ENCODE measurements at regions of chr5 and their contacts with region 1.

Region 1: DNA sequence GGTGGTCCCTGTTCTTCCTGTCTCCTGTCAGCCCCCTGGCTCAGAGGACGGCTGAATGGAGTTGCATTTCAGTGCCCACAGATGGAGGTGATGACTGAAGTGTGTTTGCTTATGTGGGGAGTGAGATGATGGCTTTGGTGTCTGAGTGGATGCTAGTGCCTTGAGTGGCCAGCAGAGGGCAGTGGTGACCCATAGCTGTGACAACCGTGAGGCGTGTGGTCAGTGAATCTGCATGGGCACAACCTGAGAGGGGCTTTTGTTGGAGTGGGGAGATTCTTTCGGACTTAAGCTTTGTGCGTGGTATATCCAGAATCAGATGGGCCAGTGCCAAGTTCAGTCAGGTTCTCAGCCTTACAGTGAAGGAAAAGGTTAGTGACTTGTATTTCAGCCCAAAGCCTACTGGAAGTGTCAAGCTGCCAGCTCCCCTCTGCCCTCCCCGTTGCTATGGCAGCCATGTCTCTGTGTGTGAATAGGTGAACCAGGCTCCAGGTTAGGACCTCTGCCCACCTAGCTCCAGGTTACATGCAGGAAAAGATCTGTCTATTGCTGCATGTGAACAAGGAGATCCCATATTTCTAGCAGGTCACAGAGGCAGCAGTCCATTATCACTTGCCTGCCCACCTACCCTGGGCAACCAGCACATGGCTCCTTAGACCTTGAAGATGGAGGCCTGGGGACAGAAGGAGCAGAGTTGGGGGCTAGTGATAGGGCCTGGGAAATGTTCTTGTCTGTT is 14.7 kb upstream of the CXXC5 start:
- DNase-seq: peak; percentile 49 to 68 (median 62)
- ATAC-seq: peak; percentile 66
- H3K4me3 ChIP-seq: no peak overlapping the region
- H3K4me3 Mint-ChIP-seq: no peak overlapping the region
- H3K27ac ChIP-seq: no peak overlapping the region
- H3K27ac Mint-ChIP-seq: peak overlapping the region in 6 of 9 donors; percentile 3 to 41 (median 22)
- H3K4me1 ChIP-seq: peaks cover 27 to 28% of the 10 kb centered on the region in 2 donors
- H3K4me1 Mint-ChIP-seq: peaks cover 22 to 40% (median 39%) of the 10 kb centered on the region in 7 donors
- H3K27me3 ChIP-seq: no peaks in the 10 kb centered on the region
- H3K27me3 Mint-ChIP-seq: peaks cover 0 to 5% (median 0%) of the 10 kb centered on the region in 5 donors

Region 2: DNA sequence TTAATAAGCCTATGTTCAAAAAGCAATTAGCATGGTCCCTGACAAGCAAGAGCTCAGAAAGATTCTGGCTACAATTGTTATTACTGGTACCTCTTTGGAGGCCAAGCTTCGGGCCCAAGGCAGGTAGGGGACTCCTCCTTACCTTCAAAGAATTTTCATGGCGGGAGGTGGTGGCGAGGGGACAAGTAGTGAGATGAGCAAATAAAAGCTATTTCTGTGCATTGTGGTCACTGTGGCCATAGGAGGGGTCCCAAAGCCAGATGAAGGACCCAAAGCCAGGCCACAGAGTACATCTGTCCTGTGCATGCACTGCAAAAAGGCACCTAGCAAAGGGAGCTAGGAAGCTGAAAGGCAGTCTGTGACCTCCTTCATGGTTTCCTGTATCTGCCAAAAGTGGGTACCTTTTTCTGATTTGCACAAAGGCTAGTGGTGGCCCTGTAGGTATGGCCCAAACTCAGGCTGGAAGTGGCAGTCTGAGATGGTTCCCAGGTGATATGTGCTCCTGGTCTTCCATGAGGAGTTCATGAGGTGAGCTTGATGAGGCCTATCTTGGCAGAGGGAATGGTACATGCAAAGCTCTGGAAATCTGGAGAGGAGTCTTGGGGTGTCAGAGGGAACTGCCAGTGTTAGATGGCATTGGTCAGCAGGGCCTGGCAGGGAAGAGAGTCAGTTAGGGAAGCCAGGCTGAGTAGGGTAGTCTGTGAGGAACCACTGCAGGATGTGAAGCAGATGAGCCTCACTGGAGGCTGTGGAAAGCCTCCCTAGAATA is 11.4 kb after region 1 on chr5:
- CTCF ChIA-PET with region 1: interaction called, 8 read pairs
- POLR2A ChIA-PET with region 1: interaction called, 7 read pairs
- intact Hi-C with region 1: loop called (anchors 1 kb)
- DNase-seq: no peak
- ATAC-seq: no peak
- H3K4me3 ChIP-seq: no peak overlapping the region
- H3K4me3 Mint-ChIP-seq: no peak overlapping the region
- H3K27ac ChIP-seq: no peak overlapping the region
- H3K27ac Mint-ChIP-seq: peak overlapping the region in 1 of 9 donors; percentile 18
- H3K4me1 ChIP-seq: peaks cover 0 to 26% of the 10 kb centered on the region in 2 donors
- H3K4me1 Mint-ChIP-seq: peaks cover 7 to 24% (median 19%) of the 10 kb centered on the region in 7 donors
- H3K27me3 ChIP-seq: peaks cover 0 to 15% of the 10 kb centered on the region in 2 donors
- H3K27me3 Mint-ChIP-seq: peaks cover 8 to 37% (median 18%) of the 10 kb centered on the region in 5 donors

Region 3: GRCh38 chr5:139668064-139668880 is 34.8 kb after region 1 on chr5:
- CTCF ChIA-PET with region 1: interaction called, 6 read pairs
- POLR2A ChIA-PET with region 1: interaction called, 3 read pairs
- intact Hi-C with region 1: loop called (anchors 2 kb)
- DNase-seq: peak in 4 of 9 donors; percentile 21 to 48 (median 25)
- ATAC-seq: peak; percentile 14
- H3K4me3 ChIP-seq: peak overlapping the region; percentile 46
- H3K4me3 Mint-ChIP-seq: peak overlapping the region; percentile 60 to 86 (median 78)
- H3K27ac ChIP-seq: peak overlapping the region; percentile 46
- H3K27ac Mint-ChIP-seq: peak overlapping the region in 2 of 9 donors; percentile 31 to 89
- H3K4me1 ChIP-seq: peaks cover 36% of the 10 kb centered on the region in 2 donors
- H3K4me1 Mint-ChIP-seq: peaks cover 7 to 51% (median 34%) of the 10 kb centered on the region in 7 donors
- H3K27me3 ChIP-seq: peaks cover 0 to 3% of the 10 kb centered on the region in 2 donors
- H3K27me3 Mint-ChIP-seq: peaks cover 0 to 4% (median 3%) of the 10 kb centered on the region in 5 donors

Region 4: GRCh38 chr5:139711067-139711905 is 77.8 kb after region 1 on chr5:
- CTCF ChIA-PET with region 1: interaction called, 6 read pairs
- POLR2A ChIA-PET with region 1: no interaction called
- intact Hi-C with region 1: loop called in 1 of 2 experiments (anchors 1 kb)
- DNase-seq: peak; percentile 37 to 74 (median 53)
- ATAC-seq: peak; percentile 75
- H3K4me3 ChIP-seq: peak overlapping the region; percentile 58
- H3K4me3 Mint-ChIP-seq: peak overlapping the region; percentile 74 to 85 (median 80)
- H3K27ac ChIP-seq: peak overlapping the region; percentile 63
- H3K27ac Mint-ChIP-seq: peak overlapping the region in 6 of 9 donors; percentile 25 to 87 (median 64)
- H3K4me1 ChIP-seq: peaks cover 14 to 19% of the 10 kb centered on the region in 2 donors
- H3K4me1 Mint-ChIP-seq: peaks cover 10 to 31% (median 23%) of the 10 kb centered on the region in 7 donors
- H3K27me3 ChIP-seq: no peaks in the 10 kb centered on the region
- H3K27me3 Mint-ChIP-seq: peaks cover 0 to 51% (median 0%) of the 10 kb centered on the region in 5 donors

Region 5: DNA sequence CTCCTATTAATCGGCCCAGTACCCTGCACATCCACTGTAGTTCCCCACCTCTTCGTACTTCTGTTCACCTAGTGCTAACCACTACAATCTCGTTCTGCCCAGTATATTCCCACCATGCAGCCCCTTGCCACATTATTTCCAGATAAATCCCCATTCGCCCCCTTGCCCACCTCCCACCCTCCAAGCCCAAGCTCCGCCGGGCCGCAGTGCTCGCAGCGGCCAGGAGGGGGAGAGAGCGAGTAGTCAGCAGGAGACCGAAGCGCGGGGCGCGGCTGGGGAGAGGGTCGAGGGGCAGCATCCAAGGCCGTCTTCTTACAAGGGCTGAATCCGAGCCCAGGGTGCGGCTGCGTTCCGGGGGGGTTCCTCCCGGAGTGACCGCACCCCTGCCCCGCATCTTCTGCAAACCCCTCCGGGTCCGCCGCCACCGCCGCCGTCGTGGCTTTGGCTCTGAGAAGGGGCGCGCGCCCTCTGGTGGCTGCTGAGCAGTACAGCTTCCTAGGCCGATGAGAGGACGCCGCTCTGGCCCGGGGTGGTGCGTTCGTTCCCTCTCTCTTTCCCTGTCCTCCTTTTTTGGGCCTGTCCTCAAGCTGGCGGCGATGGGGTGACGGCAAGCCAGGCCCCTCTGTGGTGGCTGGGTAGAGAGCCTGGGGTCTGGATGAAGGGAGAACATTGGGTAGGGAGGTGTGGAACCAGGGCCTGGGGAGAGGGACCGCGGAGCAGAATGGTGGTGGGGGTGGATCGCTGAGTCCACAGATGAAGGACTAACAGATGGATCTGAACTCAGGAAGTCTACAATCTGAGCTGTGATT is 132.2 kb after region 1 on chr5:
- CTCF ChIA-PET with region 1: interaction called, 51 read pairs
- POLR2A ChIA-PET with region 1: interaction called, 4 read pairs
- intact Hi-C with region 1: loop called (anchors 1 kb)
- DNase-seq: peak; percentile 62 to 93 (median 85)
- ATAC-seq: peak; percentile 95
- H3K4me3 ChIP-seq: peak overlapping the region; percentile 62
- H3K4me3 Mint-ChIP-seq: peak overlapping the region; percentile 37 to 84 (median 66)
- H3K27ac ChIP-seq: no peak overlapping the region
- H3K27ac Mint-ChIP-seq: peak overlapping the region in 2 of 9 donors; percentile 48 to 49
- H3K4me1 ChIP-seq: peaks cover 4 to 8% of the 10 kb centered on the region in 2 donors
- H3K4me1 Mint-ChIP-seq: peaks cover 0 to 12% (median 5%) of the 10 kb centered on the region in 7 donors
- H3K27me3 ChIP-seq: peaks cover 3 to 8% of the 10 kb centered on the region in 2 donors
- H3K27me3 Mint-ChIP-seq: peaks cover 22 to 53% (median 28%) of the 10 kb centered on the region in 5 donors

Region 6: GRCh38 chr5:139828207-139828895 is 194.9 kb after region 1 on chr5:
- CTCF ChIA-PET with region 1: no interaction called
- POLR2A ChIA-PET with region 1: no interaction called
- intact Hi-C with region 1: no loop called
- DNase-seq: no peak
- ATAC-seq: no peak
- H3K4me3 ChIP-seq: no peak overlapping the region
- H3K4me3 Mint-ChIP-seq: no peak overlapping the region
- H3K27ac ChIP-seq: no peak overlapping the region
- H3K27ac Mint-ChIP-seq: no peak overlapping the region
- H3K4me1 ChIP-seq: no peaks in the 10 kb centered on the region
- H3K4me1 Mint-ChIP-seq: no peaks in the 10 kb centered on the region
- H3K27me3 ChIP-seq: no peaks in the 10 kb centered on the region
- H3K27me3 Mint-ChIP-seq: peaks cover 0 to 24% (median 5%) of the 10 kb centered on the region in 5 donors

Measured in naive thymus-derived CD4-positive, alpha-beta T cell (primary cell).